GM10248 (cell line): ENCODE measurements at regions of chr16 and their contacts with region 1.

Region 1: GRCh38 chr16:788394-789126 is at the start of gene CHTF18:
- DNase-seq: peak; percentile 100
- CTCF ChIP-seq: no peak

Region 2: DNA sequence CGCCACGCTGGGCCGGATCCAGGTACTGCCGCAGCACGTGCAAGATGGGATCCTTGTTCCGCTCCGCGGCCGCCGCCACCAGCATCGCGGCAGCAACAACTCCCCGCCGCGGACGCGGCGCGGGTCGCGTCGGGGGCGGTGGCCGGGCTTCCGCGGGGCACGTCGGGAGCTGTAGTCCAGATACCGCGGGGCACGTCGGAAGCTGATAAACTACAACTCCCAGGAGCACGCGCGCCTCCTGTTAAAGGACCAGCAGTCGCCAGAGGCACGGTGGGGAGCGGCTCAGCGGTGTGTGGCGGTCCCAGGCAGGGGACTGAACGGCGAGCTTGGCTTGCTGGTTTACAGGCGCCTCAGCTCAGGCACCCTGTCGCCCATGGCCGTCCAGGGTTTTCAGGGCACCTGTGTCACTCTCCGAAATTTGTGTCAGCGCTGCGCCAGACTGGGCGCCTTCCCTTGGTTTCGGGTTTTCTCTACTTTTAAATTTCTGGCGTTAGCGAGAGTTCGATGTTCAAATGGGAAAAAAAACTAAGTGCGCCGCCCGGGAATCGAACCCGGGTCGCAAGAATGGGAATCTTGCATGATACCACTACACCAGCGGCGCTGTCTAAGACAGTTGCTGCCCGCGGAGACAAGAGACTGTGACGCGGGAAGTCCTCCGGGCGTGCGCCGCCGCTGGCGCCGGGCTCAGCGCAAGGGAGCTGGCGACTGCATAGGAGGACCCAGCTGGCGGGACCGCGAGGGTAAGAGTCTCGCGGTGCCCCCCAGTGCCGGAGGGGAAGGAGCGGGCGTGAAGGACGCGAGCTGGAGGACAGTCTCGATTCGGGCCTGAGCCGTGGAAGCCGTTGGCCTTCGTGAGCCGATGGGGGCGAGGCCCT is 152.1 kb before region 1 on chr16 and contains the start of gene METTL26:
- CTCF ChIA-PET with region 1: no interaction called
- POLR2A ChIA-PET with region 1: no interaction called
- DNase-seq: peak; percentile 96
- CTCF ChIP-seq: no peak

Region 3: GRCh38 chr16:726438-727290 is 61.9 kb before region 1 on chr16 and contains the starts of genes CCDC78 and HAGHL:
- CTCF ChIA-PET with region 1: interaction called, 14 read pairs
- POLR2A ChIA-PET with region 1: no interaction called
- DNase-seq: peak; percentile 81
- CTCF ChIP-seq: no peak

Region 4: GRCh38 chr16:813204-813915 is 24.8 kb after region 1 on chr16:
- CTCF ChIA-PET with region 1: no interaction called
- POLR2A ChIA-PET with region 1: no interaction called
- DNase-seq: peak; percentile 76
- CTCF ChIP-seq: peak; percentile 61

Region 5: DNA sequence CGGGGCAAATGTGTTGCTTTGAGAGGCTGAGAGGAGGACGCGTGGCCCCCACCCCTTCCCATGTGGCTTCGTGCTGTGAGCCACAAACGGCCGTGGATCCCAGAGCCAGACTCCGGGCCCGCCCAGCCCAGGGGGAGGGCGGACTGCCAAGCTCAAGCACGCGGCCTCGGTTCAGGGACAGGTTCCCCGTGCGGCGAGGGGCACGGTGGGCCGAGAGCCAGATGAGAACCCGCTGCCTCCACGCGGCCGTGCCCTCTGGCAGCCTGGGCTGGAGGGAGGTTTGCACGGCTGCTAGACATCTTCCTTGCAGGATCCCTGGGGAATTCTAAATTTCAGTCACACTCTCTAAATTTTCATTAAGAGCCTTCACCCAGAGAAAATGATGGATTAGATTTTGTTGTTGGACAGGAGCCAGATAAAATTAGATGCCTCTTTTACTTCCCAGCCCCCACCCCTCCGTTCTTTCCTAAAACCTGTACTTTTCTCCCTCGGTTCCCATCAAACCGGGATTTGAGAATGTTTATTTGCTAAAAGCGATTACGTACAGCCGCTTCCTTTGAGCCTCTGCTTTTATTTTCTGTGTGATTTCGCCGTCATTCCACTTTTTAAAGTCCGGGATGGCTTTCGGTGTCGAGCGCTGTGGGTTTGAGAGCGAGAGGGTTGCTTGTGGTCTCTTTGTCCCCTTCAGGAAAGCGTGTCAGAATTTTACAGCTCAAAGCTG is 36.9 kb after region 1 on chr16:
- CTCF ChIA-PET with region 1: no interaction called
- POLR2A ChIA-PET with region 1: no interaction called
- DNase-seq: no peak
- CTCF ChIP-seq: no peak